Naive thymus-derived CD4-positive, alpha-beta T cell (primary cell): ENCODE measurements at regions of chr3 and their contacts with region 1.

Region 1: DNA sequence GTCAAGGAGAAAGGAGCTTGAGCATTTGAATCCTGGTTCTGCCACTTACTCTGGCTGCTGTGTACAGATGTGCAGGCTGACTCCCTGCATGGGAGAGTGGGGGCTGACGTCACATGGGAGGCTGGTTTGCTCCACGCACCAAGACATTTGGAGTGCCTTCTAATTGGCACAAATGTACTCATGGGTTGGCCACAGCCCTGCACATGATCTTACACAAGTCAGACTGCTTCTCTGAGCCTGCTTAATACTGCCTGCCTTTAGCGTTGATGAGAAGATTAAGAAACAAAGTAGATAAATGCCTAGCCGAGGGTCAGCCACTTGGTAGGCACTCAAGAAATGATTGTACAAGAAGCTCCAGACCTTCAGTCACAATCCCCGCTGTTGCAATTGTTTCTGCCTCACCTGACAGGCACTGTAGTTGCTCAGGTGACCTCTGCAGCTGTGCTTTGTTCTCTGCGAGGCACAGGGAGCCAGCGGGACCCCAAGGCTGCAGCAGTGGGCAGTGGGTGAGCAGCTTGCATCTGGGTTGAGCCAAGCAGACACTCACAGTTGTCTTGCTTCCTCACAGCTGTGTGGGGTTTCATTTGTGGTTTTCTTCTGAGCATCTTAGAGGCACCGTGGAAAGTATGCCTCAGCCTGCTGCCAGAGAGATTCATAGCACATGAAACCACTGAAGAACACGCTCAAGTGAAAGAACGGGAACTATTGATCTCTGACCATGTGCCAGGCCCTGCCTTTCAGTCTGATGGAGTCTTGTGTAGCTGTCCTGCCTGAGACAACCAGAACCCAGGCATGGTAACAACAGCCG is 33.1 kb downstream of the GRK7 start:
- DNase-seq: peak; percentile 14 to 78 (median 61)
- ATAC-seq: peak; percentile 82
- H3K4me3 ChIP-seq: peak overlapping the region; percentile 68
- H3K4me3 Mint-ChIP-seq: peak overlapping the region; percentile 86 to 97 (median 90)
- H3K27ac ChIP-seq: peak overlapping the region; percentile 79
- H3K27ac Mint-ChIP-seq: peak overlapping the region; percentile 92 to 99 (median 97)
- H3K4me1 ChIP-seq: peaks cover 48 to 56% of the 10 kb centered on the region in 2 donors
- H3K4me1 Mint-ChIP-seq: peaks cover 45 to 71% (median 60%) of the 10 kb centered on the region in 7 donors
- H3K27me3 ChIP-seq: no peaks in the 10 kb centered on the region
- H3K27me3 Mint-ChIP-seq: peaks cover 0 to 2% (median 0%) of the 10 kb centered on the region in 5 donors

Region 2: GRCh38 chr3:141644931-141645330 is 151.4 kb before region 1 on chr3:
- CTCF ChIA-PET with region 1: no interaction called
- POLR2A ChIA-PET with region 1: no interaction called
- intact Hi-C with region 1: no loop called
- DNase-seq: peak; percentile 8 to 76 (median 43)
- ATAC-seq: peak; percentile 90
- H3K4me3 ChIP-seq: no peak overlapping the region
- H3K4me3 Mint-ChIP-seq: no peak overlapping the region
- H3K27ac ChIP-seq: no peak overlapping the region
- H3K27ac Mint-ChIP-seq: peak overlapping the region in 1 of 9 donors; percentile 52
- H3K4me1 ChIP-seq: no peaks in the 10 kb centered on the region
- H3K4me1 Mint-ChIP-seq: peaks cover 0 to 7% (median 0%) of the 10 kb centered on the region in 7 donors
- H3K27me3 ChIP-seq: no peaks in the 10 kb centered on the region
- H3K27me3 Mint-ChIP-seq: peaks cover 0 to 4% (median 0%) of the 10 kb centered on the region in 5 donors

Region 3: GRCh38 chr3:141845407-141846049 is 49.2 kb after region 1 on chr3:
- CTCF ChIA-PET with region 1: interaction called, 3 read pairs
- POLR2A ChIA-PET with region 1: interaction called, 4 read pairs
- intact Hi-C with region 1: loop called in 1 of 2 experiments (anchors 2 kb)
- DNase-seq: peak in 7 of 9 donors; percentile 10 to 46 (median 25)
- ATAC-seq: peak; percentile 55
- H3K4me3 ChIP-seq: no peak overlapping the region
- H3K4me3 Mint-ChIP-seq: no peak overlapping the region
- H3K27ac ChIP-seq: no peak overlapping the region
- H3K27ac Mint-ChIP-seq: peak overlapping the region in 2 of 9 donors; percentile 36 to 42
- H3K4me1 ChIP-seq: no peaks in the 10 kb centered on the region
- H3K4me1 Mint-ChIP-seq: peaks cover 4 to 18% (median 9%) of the 10 kb centered on the region in 7 donors
- H3K27me3 ChIP-seq: no peaks in the 10 kb centered on the region
- H3K27me3 Mint-ChIP-seq: peaks cover 0 to 6% (median 5%) of the 10 kb centered on the region in 5 donors

Region 4: GRCh38 chr3:142028243-142028777 is 232.0 kb after region 1 on chr3:
- CTCF ChIA-PET with region 1: no interaction called
- POLR2A ChIA-PET with region 1: no interaction called
- intact Hi-C with region 1: loop called in 1 of 2 experiments (anchors 5 kb)
- DNase-seq: peak in 7 of 9 donors; percentile 45 to 72 (median 63)
- ATAC-seq: peak; percentile 90
- H3K4me3 ChIP-seq: peak overlapping the region; percentile 47
- H3K4me3 Mint-ChIP-seq: peak overlapping the region; percentile 81 to 97 (median 90)
- H3K27ac ChIP-seq: peak overlapping the region; percentile 57
- H3K27ac Mint-ChIP-seq: peak overlapping the region; percentile 49 to 92 (median 82)
- H3K4me1 ChIP-seq: no peaks in the 10 kb centered on the region
- H3K4me1 Mint-ChIP-seq: peaks cover 13 to 50% (median 49%) of the 10 kb centered on the region in 7 donors
- H3K27me3 ChIP-seq: no peaks in the 10 kb centered on the region
- H3K27me3 Mint-ChIP-seq: no peaks in the 10 kb centered on the region

Region 5: GRCh38 chr3:142148792-142149672 is 352.7 kb after region 1 on chr3 and contains the start of gene TFDP2:
- CTCF ChIA-PET with region 1: no interaction called
- POLR2A ChIA-PET with region 1: no interaction called
- intact Hi-C with region 1: loop called in 1 of 2 experiments (anchors 2 kb)
- DNase-seq: peak; percentile 77 to 88 (median 86)
- ATAC-seq: peak; percentile 99
- H3K4me3 ChIP-seq: peak within 1 kb of the TSS; percentile 81
- H3K4me3 Mint-ChIP-seq: peak within 1 kb of the TSS; percentile 85 to 96 (median 92)
- H3K27ac ChIP-seq: peak within 1 kb of the TSS; percentile 78
- H3K27ac Mint-ChIP-seq: peak within 1 kb of the TSS; percentile 57 to 95 (median 87)
- H3K4me1 ChIP-seq: peaks cover 0 to 13% of the 10 kb centered on the region in 2 donors
- H3K4me1 Mint-ChIP-seq: peaks cover 24 to 41% (median 32%) of the 10 kb centered on the region in 7 donors
- H3K27me3 ChIP-seq: no peaks in the 10 kb centered on the region
- H3K27me3 Mint-ChIP-seq: peaks cover 0 to 16% (median 0%) of the 10 kb centered on the region in 5 donors
- total RNA-seq, gene TFDP2: 23.7 to 44.7 (median 41.0) TPM

Region 6: GRCh38 chr3:142447852-142448823 is 651.9 kb after region 1 on chr3 and contains the start of gene XRN1:
- CTCF ChIA-PET with region 1: no interaction called
- POLR2A ChIA-PET with region 1: no interaction called
- intact Hi-C with region 1: loop called in 1 of 2 experiments (anchors 2 kb)
- DNase-seq: peak; percentile 90 to 97 (median 94)
- ATAC-seq: peak; percentile 99
- H3K4me3 ChIP-seq: peak within 1 kb of the TSS; percentile 78
- H3K4me3 Mint-ChIP-seq: peak within 1 kb of the TSS; percentile 89 to 100 (median 98)
- H3K27ac ChIP-seq: peak within 1 kb of the TSS; percentile 99
- H3K27ac Mint-ChIP-seq: peak within 1 kb of the TSS; percentile 98 to 100 (median 99)
- H3K4me1 ChIP-seq: peaks cover 31% of the 10 kb centered on the region in 2 donors
- H3K4me1 Mint-ChIP-seq: peaks cover 26 to 55% (median 51%) of the 10 kb centered on the region in 7 donors
- H3K27me3 ChIP-seq: no peaks in the 10 kb centered on the region
- H3K27me3 Mint-ChIP-seq: no peaks in the 10 kb centered on the region
- total RNA-seq, gene XRN1: 86.1 to 123 (median 103) TPM

Region 7: GRCh38 chr3:142595951-142596725 is 799.9 kb after region 1 on chr3 and contains the start of gene PLS1:
- CTCF ChIA-PET with region 1: no interaction called
- POLR2A ChIA-PET with region 1: no interaction called
- intact Hi-C with region 1: loop called in 1 of 2 experiments (anchors 5 kb)
- DNase-seq: peak; percentile 74 to 97 (median 85)
- ATAC-seq: peak; percentile 91
- H3K4me3 ChIP-seq: peak within 1 kb of the TSS; percentile 82
- H3K4me3 Mint-ChIP-seq: peak within 1 kb of the TSS; percentile 96 to 100 (median 98)
- H3K27ac ChIP-seq: peak within 1 kb of the TSS; percentile 67
- H3K27ac Mint-ChIP-seq: peak within 1 kb of the TSS; percentile 83 to 95 (median 91)
- H3K4me1 ChIP-seq: peaks cover 0 to 3% of the 10 kb centered on the region in 2 donors
- H3K4me1 Mint-ChIP-seq: peaks cover 0 to 32% (median 20%) of the 10 kb centered on the region in 7 donors
- H3K27me3 ChIP-seq: no peaks in the 10 kb centered on the region
- H3K27me3 Mint-ChIP-seq: peaks cover 0 to 11% (median 0%) of the 10 kb centered on the region in 5 donors
- total RNA-seq, gene PLS1: 1.6 to 2.8 (median 2.0) TPM

Region 8: DNA sequence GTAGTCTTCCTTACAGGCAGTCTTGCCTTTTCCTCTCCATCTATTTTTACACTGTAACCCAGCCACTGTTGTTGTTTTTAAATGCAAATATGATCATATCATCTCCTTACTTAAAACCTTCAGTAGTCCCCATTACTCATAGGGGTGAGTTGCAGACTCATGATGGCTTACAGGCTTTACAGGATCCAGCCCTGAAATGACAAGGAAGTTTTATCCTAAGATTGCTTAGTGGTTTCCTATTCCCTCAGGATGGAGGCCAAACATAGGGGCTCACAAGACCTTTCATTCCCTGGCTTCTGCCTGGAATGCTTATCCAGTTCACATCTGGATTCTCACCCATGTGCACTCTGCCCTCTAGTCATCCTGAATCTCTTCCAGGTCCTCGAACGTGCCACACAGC is 1120.3 kb after region 1 on chr3:
- CTCF ChIA-PET with region 1: no interaction called
- POLR2A ChIA-PET with region 1: no interaction called
- intact Hi-C with region 1: no loop called
- DNase-seq: no peak
- ATAC-seq: no peak
- H3K4me3 ChIP-seq: no peak overlapping the region
- H3K4me3 Mint-ChIP-seq: no peak overlapping the region
- H3K27ac ChIP-seq: no peak overlapping the region
- H3K27ac Mint-ChIP-seq: no peak overlapping the region
- H3K4me1 ChIP-seq: no peaks in the 10 kb centered on the region
- H3K4me1 Mint-ChIP-seq: no peaks in the 10 kb centered on the region
- H3K27me3 ChIP-seq: no peaks in the 10 kb centered on the region
- H3K27me3 Mint-ChIP-seq: peaks cover 4 to 40% (median 17%) of the 10 kb centered on the region in 5 donors